Activated T-helper 2 cell treated with anti-CD3 and anti-CD28 coated beads, Interferon-gamma antibody, Interleukin-2, Interleukin-4, amounts not matched to agents 10 μg/mL and 5 μg/mL and 100 μg/mL, durations not matched to agents 14 hours and 24 hours and 36 hours (primary cell): ENCODE measurements at regions of chr13 and their contacts with region 1.

Region 1: GRCh38 chr13:30132623-30133553 is 174.5 kb downstream of the KATNAL1 start:
- DNase-seq: peak; percentile 93
- H3K4me3 Mint-ChIP-seq: no peak overlapping the region
- H3K27ac Mint-ChIP-seq: peak overlapping the region; percentile 43
- H3K4me1 Mint-ChIP-seq: peaks cover 22% of the 10 kb centered on the region
- H3K27me3 Mint-ChIP-seq: no peaks in the 10 kb centered on the region

Region 2: DNA sequence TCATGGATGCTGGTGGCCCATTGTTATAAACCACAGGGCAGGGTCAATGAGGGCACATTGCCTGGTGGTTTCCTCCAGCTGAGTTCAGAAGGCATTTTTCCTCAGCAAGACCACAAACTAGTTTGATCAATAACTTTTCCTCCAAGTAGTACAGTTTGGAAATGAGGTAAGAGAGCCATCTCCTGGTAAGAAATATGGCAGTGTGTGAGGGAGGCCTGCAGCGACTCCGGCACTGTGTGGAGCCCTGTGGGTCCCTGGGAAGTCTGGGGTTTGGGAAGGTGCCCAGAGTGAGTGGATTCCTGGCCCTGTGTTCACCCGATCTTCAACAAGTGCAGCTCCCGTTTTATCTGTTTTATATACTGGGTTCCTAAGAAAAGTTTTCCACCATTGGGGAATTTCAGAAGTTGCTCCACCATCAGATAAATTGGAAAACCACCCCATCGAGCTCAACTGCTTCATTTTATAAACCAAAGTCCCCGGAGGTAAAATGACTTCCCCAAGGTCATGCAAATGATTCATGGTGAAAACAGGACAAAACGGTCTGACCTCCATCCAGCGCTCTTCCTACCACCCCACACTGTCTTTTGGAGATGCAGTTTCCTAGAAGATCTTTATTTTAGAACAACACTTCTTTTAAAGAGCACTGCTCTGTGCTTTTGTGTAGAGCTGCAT is 26.0 kb after region 1 on chr13:
- intact Hi-C with region 1: loop called (anchors 1 kb)
- DNase-seq: no peak
- H3K4me3 Mint-ChIP-seq: no peak overlapping the region
- H3K27ac Mint-ChIP-seq: peak overlapping the region; percentile 75
- H3K4me1 Mint-ChIP-seq: peaks cover 37% of the 10 kb centered on the region
- H3K27me3 Mint-ChIP-seq: peaks cover 1% of the 10 kb centered on the region

Region 3: DNA sequence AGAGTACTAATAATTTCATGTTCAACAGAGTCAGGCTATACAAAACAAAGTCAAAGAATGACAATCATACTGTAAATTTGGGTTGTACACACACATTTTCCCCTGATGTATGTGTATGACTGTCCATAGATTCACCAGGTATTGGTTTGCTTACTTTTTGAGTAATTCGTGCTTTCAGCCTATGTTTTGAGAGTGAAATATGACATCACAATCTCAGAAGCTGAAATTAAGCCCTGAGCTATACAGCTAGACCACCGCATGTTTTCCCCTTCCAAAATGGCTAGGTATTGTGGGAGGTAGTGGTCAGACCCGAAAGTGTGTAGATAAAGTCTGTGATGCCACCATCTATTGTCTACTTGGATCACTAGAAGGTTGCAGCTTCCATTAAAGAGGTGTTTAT is 71.7 kb after region 1 on chr13:
- intact Hi-C with region 1: loop called (anchors 5 kb)
- DNase-seq: no peak
- H3K4me3 Mint-ChIP-seq: no peak overlapping the region
- H3K27ac Mint-ChIP-seq: no peak overlapping the region
- H3K4me1 Mint-ChIP-seq: peaks cover 4% of the 10 kb centered on the region
- H3K27me3 Mint-ChIP-seq: no peaks in the 10 kb centered on the region

Region 4: DNA sequence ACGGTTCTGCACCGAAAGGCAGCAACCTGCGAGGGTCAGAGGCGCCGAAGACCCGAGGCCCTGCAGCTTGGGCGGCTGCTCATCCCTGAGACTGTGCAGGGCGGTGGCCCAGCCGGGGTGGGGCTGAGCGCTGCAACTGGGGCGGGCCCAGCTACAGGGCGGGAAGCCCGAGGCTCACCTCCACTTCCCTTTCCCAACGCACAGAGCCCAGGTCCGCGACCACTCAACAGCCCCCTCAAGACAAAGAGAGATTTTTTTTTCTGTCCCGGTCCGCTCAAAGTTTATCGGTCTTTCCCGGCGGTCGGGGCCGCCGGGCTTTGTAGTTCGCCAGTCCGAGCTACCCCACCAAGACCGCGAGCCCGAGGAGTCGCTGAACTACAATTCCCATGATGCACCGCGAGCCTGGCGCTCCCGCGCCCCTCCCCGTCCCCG is 173.9 kb after region 1 on chr13:
- intact Hi-C with region 1: loop called (anchors 2 kb)
- DNase-seq: peak; percentile 88
- H3K4me3 Mint-ChIP-seq: peak overlapping the region; percentile 86
- H3K27ac Mint-ChIP-seq: peak overlapping the region; percentile 80
- H3K4me1 Mint-ChIP-seq: peaks cover 38% of the 10 kb centered on the region
- H3K27me3 Mint-ChIP-seq: no peaks in the 10 kb centered on the region

Region 5: GRCh38 chr13:30334663-30335386 is 201.9 kb after region 1 on chr13:
- intact Hi-C with region 1: loop called (anchors 1 kb)
- DNase-seq: no peak
- H3K4me3 Mint-ChIP-seq: no peak overlapping the region
- H3K27ac Mint-ChIP-seq: no peak overlapping the region
- H3K4me1 Mint-ChIP-seq: peaks cover 13% of the 10 kb centered on the region
- H3K27me3 Mint-ChIP-seq: no peaks in the 10 kb centered on the region

Region 6: DNA sequence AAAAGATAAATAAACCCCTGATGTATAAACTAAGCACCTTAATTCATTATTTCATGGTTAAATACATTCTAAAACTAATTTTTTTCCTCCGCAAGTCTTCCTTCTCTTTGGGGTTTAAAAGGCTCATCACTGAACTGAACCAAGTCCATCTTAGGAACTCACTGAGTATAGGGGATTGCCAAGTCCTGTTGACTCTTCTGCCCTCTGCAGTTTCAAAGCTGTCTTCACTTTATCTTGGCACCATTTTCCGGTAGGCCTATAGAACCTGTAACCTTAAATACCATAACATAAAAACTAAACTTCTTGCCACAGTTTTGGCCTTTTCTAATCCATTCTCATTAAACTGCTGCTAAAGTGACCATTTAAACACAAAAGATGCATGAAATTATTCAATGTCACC is 418.3 kb after region 1 on chr13:
- intact Hi-C with region 1: loop called (anchors 1 kb)
- DNase-seq: no peak
- H3K4me3 Mint-ChIP-seq: no peak overlapping the region
- H3K27ac Mint-ChIP-seq: no peak overlapping the region
- H3K4me1 Mint-ChIP-seq: peaks cover 6% of the 10 kb centered on the region
- H3K27me3 Mint-ChIP-seq: peaks cover 5% of the 10 kb centered on the region

Region 7: GRCh38 chr13:30581582-30581981 is 448.7 kb after region 1 on chr13:
- intact Hi-C with region 1: loop called (anchors 5 kb)
- DNase-seq: no peak
- H3K4me3 Mint-ChIP-seq: no peak overlapping the region
- H3K27ac Mint-ChIP-seq: no peak overlapping the region
- H3K4me1 Mint-ChIP-seq: peaks cover 24% of the 10 kb centered on the region
- H3K27me3 Mint-ChIP-seq: peaks cover 28% of the 10 kb centered on the region